ENCODE measurements at regions of chr16 and their contacts with region 1.

Region 1: DNA sequence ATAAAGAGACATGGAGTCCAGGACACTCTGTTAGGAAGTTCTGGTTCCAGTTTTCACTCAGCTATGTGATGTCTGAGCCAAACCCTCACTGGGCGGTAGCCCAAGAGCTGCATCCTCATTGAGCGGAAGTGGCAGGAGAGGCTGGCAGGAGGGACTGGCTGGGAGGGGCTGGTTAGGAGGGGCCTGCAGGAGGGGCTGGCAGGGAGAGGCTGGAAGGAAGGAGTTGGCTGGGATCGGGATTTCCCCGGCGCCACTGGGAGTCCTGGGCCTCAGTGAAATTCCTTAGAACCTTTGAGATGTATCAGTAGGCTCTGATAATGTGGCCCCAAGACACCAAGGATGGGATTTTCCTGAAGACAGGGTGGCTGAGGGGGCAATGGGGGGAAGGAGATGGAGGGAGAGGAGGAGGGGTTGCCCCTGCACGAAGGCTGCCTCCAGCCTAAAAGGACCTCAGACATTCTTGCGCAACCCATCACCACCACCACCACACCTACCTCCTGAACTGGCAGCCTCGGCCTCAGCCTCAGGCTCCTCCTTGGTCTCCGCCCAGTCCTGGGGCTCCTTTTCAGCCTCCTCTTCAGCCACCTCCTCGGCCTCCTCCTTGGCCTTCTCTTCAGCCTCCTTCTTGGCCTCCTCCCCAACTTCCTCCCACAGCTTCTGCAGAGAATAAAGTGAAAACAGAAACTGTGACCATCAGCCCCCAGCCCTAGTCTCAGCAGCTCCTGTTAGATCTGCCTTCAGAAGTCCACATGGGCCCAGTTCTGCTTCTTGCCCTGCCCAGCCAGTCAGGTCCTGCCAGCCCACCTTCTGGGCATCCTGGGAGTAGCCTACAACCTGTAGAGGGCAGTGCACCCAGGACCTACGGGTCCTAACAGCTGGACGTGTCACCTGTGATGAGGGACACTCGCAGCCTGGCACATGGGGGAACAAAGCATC is 31.7 kb downstream of the CNGB1 start:
- DNase-seq: peak; percentile 92

Region 2: DNA sequence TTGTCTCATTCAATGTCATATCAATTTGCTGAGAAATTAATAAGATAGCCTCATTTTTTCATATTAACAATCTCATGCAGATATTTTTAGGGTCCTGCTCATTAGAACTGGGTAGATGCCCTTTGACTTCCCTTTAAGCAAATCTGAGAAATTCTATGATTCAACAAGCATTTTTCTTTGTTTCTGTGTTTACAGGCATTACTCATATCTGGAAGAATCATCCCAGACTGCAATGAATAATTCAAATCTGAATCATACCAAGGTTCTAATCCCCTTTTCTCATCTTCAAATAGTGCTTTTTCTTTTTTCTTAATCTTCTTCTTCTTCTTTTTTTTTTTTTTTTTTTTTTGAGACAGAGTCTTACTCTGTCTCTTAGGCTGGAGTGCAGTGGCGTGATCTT is 67.7 kb before region 1 on chr16:
- intact Hi-C with region 1: no loop called
- DNase-seq: no peak

Region 3: GRCh38 chr16:57966133-57966805 is 27.1 kb after region 1 on chr16:
- intact Hi-C with region 1: loop called in 1 of 2 experiments (anchors 1 kb)
- DNase-seq: no peak

Measured in posterior vena cava (tissue), 2 donors.